ENCODE measurements at regions of chr9 and their contacts with region 1.

Region 1: DNA sequence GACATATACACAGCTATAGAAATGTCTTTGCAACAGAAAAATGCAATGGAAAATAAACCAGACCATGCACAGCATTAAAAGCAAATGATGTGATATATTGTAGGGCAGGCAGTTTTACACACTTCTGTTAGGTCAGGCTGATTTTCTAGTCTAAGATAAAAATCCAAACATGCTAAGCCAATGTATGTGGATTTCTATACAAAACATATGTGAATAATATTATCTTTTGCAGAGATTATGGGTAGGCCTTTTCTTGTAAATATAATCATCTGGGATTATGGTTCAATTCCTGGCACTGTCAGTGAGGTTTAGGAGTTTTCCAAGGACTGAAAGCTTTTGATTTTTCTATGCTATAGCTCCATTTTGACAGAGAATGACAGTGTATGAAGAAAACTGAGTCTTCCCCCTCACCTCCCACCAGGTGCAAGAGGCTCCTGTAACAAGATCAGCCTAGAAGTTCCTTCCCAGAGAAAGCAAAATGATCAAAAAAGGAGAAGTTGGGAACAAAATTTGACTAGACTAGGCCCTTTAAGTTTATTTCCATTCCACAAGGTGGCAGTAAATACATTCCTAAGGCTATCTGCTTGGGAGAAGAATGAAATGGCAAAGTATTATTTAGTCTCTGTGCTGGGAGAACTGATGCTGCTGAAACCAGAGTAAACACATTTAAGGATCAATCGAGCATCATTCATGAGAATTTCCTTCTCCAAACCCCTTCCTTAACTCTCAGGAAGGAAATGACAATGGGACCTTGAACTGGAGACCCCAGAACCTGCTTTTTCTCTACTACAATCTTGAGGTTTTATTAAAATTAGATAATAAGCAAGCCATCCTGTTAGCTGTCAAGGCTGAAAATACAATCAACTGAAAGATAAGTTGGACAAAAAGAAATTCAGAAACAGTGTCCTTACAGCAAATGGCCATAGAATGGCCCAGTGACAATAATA is 133.0 kb upstream of the TUT7 start:
- DNase-seq: no peak
- ATAC-seq: peak; percentile 70 to 84
- H3K4me3 ChIP-seq: no peak overlapping the region
- H3K27ac ChIP-seq: no peak overlapping the region
- H3K4me1 ChIP-seq: no peaks in the 10 kb centered on the region
- H3K27me3 ChIP-seq: no peaks in the 10 kb centered on the region
- CTCF ChIP-seq: peak; percentile 52 to 67 (median 59)
- POLR2A ChIP-seq: no peak

Region 2: GRCh38 chr9:86044001-86044400 is 443.2 kb before region 1 on chr9:
- in situ Hi-C with region 1: no loop called
- intact Hi-C with region 1: no loop called
- DNase-seq: no peak
- ATAC-seq: no peak
- H3K4me3 ChIP-seq: no peak overlapping the region
- H3K27ac ChIP-seq: no peak overlapping the region
- H3K4me1 ChIP-seq: no peaks in the 10 kb centered on the region
- H3K27me3 ChIP-seq: no peaks in the 10 kb centered on the region
- CTCF ChIP-seq: no peak
- POLR2A ChIP-seq: no peak

Region 3: DNA sequence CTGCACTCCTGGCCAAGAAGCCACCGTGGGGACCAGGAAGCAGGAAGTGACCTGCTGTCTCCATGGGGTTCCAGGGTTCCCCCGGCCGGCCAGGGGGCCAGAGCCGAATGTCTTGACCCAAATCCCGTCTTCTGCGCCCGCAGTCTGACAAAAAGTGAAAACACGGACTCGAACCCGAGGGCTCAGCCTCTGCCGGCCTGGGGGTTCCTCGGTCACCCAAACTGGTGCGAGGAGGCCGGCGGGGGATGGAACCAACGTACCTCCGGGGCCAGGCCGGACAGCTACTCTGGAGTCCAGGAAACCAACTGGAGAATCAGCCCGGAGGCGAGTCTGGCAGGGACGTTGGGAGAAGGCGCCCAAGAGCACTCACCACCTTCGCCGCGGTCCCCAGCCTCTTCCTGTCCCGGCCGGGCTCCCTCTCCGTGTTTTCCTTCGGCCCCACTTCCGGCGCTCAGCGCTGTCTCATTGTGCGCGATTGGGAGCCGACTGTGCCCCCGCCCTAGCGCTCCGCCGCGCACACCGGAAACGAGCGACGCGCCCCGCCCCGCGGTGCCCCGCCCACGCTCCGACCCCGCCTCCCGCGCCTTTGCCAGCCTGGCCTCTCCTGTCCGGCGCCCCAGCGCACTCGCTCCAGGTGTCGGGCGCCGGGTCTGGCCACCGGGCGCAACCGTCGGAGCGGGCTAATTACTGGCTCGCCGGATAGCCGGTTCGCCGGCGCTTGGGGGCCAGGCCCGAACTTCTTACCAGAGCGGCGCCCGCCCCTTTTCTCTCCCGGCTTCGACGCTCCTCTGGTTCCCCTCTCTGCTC is 132.9 kb before region 1 on chr9 and contains the start of gene TUT7:
- in situ Hi-C with region 1: no loop called
- intact Hi-C with region 1: no loop called
- DNase-seq: peak; percentile 90 to 94
- ATAC-seq: peak; percentile 91 to 93
- H3K4me3 ChIP-seq: peak within 1 kb of the TSS; percentile 84 to 99 (median 92)
- H3K27ac ChIP-seq: peak within 1 kb of the TSS; percentile 94 to 99 (median 96)
- H3K4me1 ChIP-seq: peaks cover 41 to 43% of the 10 kb centered on the region in 2 donors
- H3K27me3 ChIP-seq: no peaks in the 10 kb centered on the region
- CTCF ChIP-seq: no peak
- POLR2A ChIP-seq: peak; percentile 83 to 90
- total RNA-seq, gene TUT7: 15.4 to 89.1 (median 38.6) TPM

Region 4: DNA sequence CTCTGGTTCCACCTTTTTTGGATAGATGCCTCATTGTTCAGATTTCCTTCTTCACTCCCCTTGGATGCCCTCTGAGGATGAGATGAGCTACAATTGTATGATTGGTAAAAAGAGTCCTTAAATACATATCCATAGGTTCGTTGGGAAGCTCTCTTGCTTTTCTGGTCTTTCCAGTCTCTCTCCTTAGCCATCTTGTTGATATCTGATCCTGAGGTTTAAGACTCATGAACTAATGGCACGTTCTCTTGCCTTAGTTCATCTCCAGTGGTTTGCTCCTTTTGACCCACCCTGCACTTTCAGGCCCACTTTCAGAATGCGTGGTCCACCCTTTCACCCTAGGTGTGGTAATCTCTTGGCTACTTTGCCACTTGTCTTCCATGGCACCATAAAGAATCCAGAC is 99.8 kb before region 1 on chr9:
- in situ Hi-C with region 1: no loop called
- intact Hi-C with region 1: no loop called
- DNase-seq: no peak
- ATAC-seq: no peak
- H3K4me3 ChIP-seq: no peak overlapping the region
- H3K27ac ChIP-seq: no peak overlapping the region
- H3K4me1 ChIP-seq: no peaks in the 10 kb centered on the region
- H3K27me3 ChIP-seq: no peaks in the 10 kb centered on the region
- CTCF ChIP-seq: no peak
- POLR2A ChIP-seq: no peak

Region 5: GRCh38 chr9:86997158-86997557 is 510.0 kb after region 1 on chr9:
- in situ Hi-C with region 1: no loop called
- intact Hi-C with region 1: loop called (anchors 1 kb)
- DNase-seq: no peak
- ATAC-seq: no peak
- H3K4me3 ChIP-seq: no peak overlapping the region
- H3K27ac ChIP-seq: no peak overlapping the region
- H3K4me1 ChIP-seq: no peaks in the 10 kb centered on the region
- H3K27me3 ChIP-seq: no peaks in the 10 kb centered on the region
- CTCF ChIP-seq: no peak
- POLR2A ChIP-seq: no peak

Measured in gastrocnemius medialis (tissue), 4 donors.